Mammary epithelial cell (primary cell): ENCODE measurements at regions of chr2 and their contacts with region 1.

Region 1: DNA sequence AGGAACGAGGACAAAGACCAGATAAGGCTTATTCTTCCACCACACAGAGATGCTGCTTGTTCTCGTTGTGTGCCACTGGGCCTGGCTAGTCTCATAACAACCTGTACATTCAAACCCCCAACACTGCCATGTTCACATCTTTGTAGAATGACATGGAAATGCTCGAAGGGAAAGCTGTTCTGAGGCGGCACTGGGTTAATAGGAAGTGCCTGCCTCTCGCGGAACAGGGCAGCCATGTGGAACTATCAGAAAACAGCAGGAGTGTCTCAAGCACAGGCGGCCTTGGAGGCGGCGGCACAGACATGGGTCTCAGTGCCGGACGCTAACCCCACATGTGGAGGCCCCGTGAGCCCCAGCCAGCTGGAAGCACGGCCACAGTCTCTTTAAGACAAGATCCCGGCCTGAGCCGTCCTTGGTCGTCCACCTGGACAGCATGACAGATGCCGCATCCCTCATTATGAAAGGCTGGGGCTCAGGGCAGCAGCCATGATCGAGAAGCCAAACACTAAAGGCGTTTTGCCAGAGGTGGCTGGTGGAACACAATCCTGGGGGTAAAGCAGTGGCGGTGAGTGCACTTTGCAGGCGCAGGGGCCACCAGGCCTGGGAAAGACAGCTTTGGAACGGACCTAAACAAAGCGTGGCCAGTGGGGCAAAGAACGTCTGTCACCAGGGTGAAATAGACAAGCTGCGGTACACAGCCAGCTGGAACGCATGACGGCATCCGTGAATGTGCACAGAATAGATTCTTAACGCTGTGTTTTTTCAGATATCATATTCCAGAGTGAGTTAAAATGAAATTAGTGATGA is 161.0 kb downstream of the HDAC4 start:
- DNase-seq: no peak
- H3K4me3 ChIP-seq: no peak overlapping the region
- H3K27ac ChIP-seq: no peak overlapping the region
- H3K4me1 ChIP-seq: peaks cover 5% of the 10 kb centered on the region
- H3K27me3 ChIP-seq: no peaks in the 10 kb centered on the region
- CTCF ChIP-seq: no peak

Region 2: DNA sequence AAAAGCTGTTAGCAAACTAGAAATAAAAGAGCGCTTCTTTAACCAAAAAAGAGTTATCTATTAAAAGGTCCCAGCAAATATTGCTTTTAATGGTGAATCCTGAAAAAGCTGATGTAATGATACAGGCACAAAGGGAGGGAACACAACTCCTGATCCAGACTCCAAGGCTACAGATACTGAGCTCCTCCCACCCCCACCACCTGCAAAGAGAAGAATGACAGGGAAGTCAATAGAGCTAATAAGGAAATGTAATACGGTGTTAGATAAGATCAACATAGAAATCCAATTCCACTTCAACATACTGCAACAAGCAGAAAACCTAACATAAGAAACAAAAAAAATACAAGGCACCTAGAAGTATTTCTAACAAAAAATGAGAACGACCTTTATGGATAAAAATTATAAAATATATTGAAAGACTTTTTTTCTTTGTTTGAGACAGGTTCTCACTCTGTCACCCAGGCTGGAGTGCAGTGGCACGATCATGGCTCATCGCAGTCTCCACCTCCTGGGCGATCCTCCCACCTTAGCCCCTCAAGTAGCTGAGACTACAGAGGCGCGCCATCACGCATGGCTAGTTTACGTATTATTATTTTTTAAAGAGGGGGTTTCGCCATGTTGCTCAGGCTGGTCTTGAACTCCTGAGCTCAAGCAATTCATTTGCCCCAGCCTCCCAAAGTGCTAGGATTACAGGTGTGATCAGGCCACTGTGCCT is 31.2 kb before region 1 on chr2:
- CTCF ChIA-PET with region 1: no interaction called
- dilution Hi-C with region 1: loop called (anchors 5 kb)
- in situ Hi-C with region 1: no loop called
- intact Hi-C with region 1: no loop called
- DNase-seq: no peak
- H3K4me3 ChIP-seq: no peak overlapping the region
- H3K27ac ChIP-seq: no peak overlapping the region
- H3K4me1 ChIP-seq: no peaks in the 10 kb centered on the region
- H3K27me3 ChIP-seq: no peaks in the 10 kb centered on the region
- CTCF ChIP-seq: no peak

Region 3: GRCh38 chr2:239318790-239319661 is 79.2 kb after region 1 on chr2:
- CTCF ChIA-PET with region 1: no interaction called
- dilution Hi-C with region 1: loop called (anchors 5 kb)
- in situ Hi-C with region 1: no loop called
- intact Hi-C with region 1: no loop called
- DNase-seq: no peak
- H3K4me3 ChIP-seq: no peak overlapping the region
- H3K27ac ChIP-seq: no peak overlapping the region
- H3K4me1 ChIP-seq: no peaks in the 10 kb centered on the region
- H3K27me3 ChIP-seq: no peaks in the 10 kb centered on the region
- CTCF ChIP-seq: no peak